Left ventricle myocardium superior (tissue), 1 donor: ENCODE measurements at regions of chr12 and their contacts with region 1.

Region 1: DNA sequence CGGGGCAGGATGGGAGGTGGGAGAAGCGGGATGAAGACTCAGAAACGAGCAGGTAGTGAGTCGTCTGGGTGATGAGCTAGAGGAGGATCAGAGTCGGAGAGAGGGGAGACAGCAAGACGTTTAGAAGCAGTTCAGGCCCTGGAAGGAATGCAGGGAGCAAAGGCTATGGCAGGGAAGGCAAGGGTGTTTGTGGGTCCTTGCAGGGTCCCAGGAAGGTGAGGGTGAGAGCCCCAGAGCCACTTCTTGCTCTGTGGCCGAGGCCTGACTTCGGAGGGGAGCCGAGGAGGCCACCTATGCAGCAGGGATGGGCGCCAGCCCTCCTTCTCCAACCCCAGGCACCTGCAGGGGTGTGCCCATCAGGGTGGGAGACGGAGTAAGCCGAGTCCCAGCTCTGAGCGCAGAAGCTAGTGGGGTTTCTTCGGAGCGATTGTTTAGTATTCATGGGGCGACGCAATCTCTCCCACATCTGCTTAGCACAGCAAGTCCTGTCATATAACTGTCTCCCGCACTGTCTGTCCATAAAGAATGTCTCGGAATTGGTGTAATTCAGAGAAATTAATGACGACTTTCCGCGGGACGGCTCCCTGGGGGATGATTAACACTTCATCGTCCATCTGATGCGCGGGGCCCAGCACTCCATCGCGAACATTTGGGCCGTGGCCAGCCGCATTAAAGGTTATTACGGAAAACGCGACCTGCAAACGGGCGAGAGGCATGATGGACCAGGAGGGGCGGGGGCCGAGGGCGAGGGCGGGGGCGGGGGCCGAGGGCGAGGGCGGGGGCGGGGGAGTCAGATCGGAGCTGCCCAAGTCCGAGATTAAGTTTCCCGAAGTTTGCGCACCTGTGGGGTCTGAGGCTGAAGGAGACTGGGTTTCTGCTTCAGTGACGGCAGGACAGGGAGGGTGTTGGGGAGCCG is 12.2 kb upstream of the CALCOCO1 start:
- DNase-seq: peak; percentile 38
- ATAC-seq: no peak

Region 2: GRCh38 chr12:53701518-53702260 is 37.8 kb before region 1 on chr12:
- intact Hi-C with region 1: loop called (anchors 2 kb)
- DNase-seq: peak; percentile 89
- ATAC-seq: peak; percentile 94

Region 3: GRCh38 chr12:54439521-54440255 is 700.2 kb after region 1 on chr12:
- intact Hi-C with region 1: no loop called
- DNase-seq: no peak
- ATAC-seq: peak; percentile 93